ENCODE measurements at regions of chr19 and their contacts with region 1.

Region 1: DNA sequence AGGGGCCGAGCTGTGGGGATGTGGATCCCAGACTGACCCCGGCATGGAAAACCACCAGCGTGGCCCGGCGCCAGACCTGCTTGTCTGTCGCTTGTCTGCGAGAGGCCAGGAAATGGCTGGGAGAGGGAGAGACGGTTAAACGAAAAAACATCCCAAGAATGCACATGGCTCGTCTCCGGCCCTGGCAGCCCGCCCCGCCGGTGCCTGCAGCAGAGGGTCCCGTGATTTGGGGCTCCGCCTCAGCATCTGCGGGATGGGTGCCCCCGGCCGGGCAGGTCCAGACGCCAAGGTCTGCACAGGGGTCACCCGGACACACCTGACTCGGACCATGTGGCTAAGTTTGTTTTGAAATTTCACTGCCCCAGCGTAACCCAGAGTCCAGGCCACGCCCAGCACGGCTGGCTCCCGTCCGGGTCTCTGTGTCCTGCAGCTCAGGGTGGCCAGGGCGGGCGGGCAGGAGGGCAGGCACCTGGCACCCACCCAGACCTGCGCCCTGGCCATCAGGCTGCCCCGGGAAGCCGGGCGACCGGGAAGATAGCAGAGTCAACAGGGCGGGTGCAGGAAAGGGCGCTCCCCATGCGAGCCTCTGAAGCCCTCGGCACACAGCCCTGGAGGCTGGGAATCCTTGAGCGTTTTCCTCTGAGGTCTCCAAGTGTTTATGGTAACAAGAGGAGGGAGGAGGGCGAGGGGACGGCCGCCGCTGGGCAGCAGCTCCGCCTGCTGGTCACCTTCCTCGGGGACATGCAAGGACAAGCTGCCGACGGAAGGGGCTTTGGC is 103.2 kb downstream of the GADD45B start:
- DNase-seq: peak; percentile 83
- CTCF ChIP-seq: peak; percentile 74

Region 2: DNA sequence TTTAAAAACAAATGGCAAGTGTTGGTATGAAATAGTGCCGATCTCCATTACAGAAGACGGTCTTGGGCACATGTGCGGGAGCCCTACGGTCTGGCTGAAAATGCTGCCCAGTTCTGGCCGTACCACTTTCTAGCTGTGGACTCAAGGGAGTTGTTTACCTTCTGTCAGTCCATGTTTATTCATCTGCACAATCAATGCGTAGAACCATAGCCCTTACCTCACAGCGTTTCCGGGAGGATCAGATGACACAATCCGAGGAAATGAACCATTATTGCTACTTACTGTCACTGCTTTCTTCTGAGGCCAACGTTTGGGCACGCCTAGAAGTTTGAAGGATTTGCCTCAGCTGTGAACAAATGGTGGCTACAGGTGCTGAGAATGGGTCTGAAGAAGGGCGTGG is 72.0 kb before region 1 on chr19:
- CTCF ChIA-PET with region 1: no interaction called
- POLR2A ChIA-PET with region 1: no interaction called
- DNase-seq: no peak
- CTCF ChIP-seq: no peak

Region 3: DNA sequence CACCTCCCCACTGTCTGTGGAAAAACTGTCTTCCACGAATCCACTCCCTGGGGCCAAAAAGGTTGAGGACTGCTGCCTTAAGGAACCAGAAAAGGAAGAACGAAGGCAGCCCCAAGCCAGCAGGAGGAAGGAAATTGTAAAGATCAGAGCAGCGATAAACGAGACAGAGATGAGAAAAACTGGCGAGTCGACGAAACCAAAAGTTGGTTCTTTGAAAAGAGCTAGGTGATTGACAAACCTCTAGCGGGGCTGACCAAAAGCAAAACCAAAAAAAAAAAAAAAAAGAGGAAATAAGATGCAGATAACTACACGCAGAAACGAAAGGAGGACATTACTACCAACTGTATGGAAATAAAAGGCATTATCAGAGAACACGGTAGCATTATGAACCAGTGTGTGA is 26.2 kb before region 1 on chr19:
- CTCF ChIA-PET with region 1: interaction called, 11 read pairs
- POLR2A ChIA-PET with region 1: no interaction called
- DNase-seq: peak; percentile 85
- CTCF ChIP-seq: no peak

Region 4: DNA sequence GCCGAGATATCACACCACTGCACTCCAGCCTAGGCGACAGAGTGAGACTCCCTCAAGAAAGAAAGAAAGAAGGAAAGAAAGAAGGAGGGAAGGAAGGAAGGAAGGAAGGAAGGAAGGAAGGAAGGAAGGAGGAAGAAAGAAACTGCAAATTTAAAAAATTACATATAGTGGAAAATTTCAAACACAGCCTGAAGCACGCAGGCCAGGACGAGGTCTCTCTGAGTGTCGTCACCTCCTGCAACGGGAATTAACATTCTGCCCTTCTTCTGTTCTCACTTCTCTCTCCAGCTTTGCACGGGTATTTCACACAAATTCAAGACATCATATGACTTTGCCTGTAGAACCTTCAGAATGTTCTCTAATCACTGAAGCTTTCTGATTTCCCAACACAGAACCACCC is 15.2 kb after region 1 on chr19:
- CTCF ChIA-PET with region 1: interaction called, 14 read pairs
- POLR2A ChIA-PET with region 1: interaction called, 3 read pairs
- DNase-seq: peak; percentile 55
- CTCF ChIP-seq: no peak

Measured in GM10248 (cell line).